ENCODE measurements at regions of chr16 and their contacts with region 1.

Region 1: DNA sequence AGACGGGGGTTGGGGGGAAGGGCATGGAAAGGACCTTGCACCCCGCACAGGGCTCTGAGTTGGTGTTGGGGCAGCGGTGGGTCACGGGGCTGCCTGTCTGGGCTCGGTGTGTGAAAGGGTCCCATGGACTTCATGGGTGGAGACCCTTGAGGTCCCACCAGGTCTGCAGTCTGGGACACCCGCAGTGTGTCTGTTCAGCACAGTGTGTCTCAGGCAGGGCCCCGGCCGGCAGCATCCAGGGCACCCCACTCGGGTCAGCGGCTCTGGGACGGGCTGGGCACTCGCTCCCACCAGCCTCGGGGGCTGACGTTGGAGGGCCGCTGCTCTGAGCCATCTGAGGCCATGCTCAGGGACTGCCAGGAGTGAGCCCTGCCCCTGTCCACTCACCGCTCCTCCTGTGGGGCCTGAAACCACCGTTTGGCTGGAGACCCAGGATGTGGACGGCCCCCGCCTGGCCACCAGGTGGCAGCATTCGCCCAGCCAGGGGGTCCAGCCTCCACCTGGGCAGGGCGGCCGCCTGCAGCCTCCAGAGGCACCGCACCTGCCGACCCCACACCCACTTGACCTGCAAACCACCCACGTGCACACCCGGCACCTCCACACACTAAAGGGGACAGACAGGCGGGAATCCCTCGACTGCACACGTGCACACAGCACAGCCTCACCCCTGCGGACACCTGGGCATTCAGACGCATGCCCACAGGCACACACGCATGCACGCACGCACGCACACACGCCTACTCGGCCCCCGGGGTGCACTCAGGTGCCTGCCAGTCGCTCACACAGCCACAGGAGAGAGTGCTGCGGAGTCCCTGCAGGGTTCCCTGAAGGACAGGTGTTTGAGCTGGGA is 10.1 kb upstream of the ZFPM1 start:
- DNase-seq: peak; percentile 62
- H3K4me3 ChIP-seq: no peak overlapping the region
- H3K27ac ChIP-seq: no peak overlapping the region
- H3K4me1 ChIP-seq: peaks cover 7% of the 10 kb centered on the region
- H3K27me3 ChIP-seq: no peaks in the 10 kb centered on the region
- CTCF ChIP-seq: peak; percentile 73 to 92

Region 2: DNA sequence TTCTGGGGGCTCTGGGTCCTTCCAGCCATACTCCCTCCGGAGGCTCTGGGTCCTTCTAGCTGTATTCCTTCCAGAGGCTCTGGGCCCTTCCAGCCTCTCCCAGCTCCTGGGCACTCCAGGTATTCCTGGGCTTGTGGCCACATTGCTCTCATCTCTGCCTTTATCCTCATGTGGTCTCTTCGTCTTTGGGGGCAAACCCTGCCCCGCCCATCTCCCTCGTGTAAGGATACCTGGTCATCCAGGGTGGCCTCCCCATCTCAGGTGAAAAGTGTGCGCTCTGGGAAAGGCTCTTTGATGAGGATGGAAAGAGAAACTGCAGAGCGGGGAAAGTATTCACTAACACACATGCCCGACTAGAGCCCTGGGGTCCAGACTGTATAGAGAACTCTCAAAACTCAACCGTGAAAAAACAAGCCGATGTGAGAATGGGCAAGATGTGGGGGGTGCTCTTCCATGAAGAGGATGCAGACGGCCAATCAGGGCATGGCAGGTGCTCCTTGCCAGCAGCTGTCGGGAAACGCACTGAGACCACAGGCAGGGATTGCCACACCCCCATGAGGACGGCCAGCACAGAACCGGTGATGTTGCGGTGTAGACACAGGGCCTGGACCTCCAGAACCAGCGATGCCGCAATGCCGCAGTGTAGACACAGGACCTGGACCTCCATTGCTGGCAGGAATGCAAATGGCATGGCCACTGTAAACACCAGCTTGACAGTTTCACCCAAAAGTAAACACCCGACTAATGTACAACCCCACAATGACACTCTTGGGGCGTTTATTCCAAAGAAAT is 327.0 kb before region 1 on chr16:
- CTCF ChIA-PET with region 1: interaction called, 11 read pairs
- dilution Hi-C with region 1: no loop called
- in situ Hi-C with region 1: no loop called
- intact Hi-C with region 1: no loop called
- DNase-seq: no peak
- H3K4me3 ChIP-seq: no peak overlapping the region
- H3K27ac ChIP-seq: no peak overlapping the region
- H3K4me1 ChIP-seq: peaks cover 28% of the 10 kb centered on the region
- H3K27me3 ChIP-seq: no peaks in the 10 kb centered on the region
- CTCF ChIP-seq: no peak

Region 3: GRCh38 chr16:88194397-88195268 is 248.3 kb before region 1 on chr16:
- CTCF ChIA-PET with region 1: no interaction called
- dilution Hi-C with region 1: no loop called
- in situ Hi-C with region 1: loop called (anchors 10 to 25 kb)
- intact Hi-C with region 1: no loop called
- DNase-seq: no peak
- H3K4me3 ChIP-seq: no peak overlapping the region
- H3K27ac ChIP-seq: no peak overlapping the region
- H3K4me1 ChIP-seq: no peaks in the 10 kb centered on the region
- H3K27me3 ChIP-seq: no peaks in the 10 kb centered on the region
- CTCF ChIP-seq: no peak

Region 4: GRCh38 chr16:88505405-88506082 is 62.6 kb after region 1 on chr16:
- CTCF ChIA-PET with region 1: no interaction called
- dilution Hi-C with region 1: no loop called
- in situ Hi-C with region 1: no loop called
- intact Hi-C with region 1: loop called (anchors 1 kb)
- DNase-seq: peak; percentile 19
- H3K4me3 ChIP-seq: no peak overlapping the region
- H3K27ac ChIP-seq: no peak overlapping the region
- H3K4me1 ChIP-seq: peaks cover 12% of the 10 kb centered on the region
- H3K27me3 ChIP-seq: no peaks in the 10 kb centered on the region
- CTCF ChIP-seq: peak; percentile 45 to 52

Region 5: DNA sequence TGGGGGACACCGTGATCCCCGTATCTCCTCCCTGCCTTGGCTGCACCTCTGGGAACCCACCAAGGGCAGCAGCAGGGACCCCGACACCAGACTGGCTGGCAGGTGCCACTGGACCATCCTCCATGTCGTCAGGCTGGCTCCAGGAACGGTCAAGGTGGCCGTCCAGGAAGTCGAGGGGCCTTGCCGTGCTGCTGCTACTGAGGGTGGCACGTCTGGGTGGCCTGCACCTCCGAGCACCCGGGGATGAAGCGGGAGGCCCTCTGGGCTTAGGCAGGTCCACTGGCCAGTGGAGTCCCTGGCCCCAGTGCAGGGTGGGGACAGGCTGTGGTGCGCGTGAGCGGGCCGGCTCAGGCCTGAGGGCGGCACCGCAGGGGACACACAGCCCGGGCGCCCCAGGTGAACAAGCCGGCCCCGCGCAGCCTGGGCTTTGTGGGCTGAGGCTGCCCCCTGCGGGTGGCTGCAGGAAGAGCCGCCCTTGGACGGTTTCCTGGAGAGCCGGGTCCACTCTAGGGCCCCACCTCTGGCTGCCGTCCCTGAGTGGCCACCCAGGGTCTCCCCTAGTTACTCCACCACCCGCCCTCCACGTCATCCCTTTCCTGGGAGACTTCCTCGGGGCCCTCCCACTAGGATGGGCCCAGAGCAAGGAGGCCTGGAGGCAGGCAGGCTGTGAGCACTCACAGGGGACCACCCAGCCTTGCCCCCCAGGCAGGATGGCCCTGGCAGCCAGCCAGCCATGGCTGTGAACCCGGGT is 84.4 kb after region 1 on chr16:
- CTCF ChIA-PET with region 1: no interaction called
- dilution Hi-C with region 1: no loop called
- in situ Hi-C with region 1: no loop called
- intact Hi-C with region 1: loop called (anchors 1 kb)
- DNase-seq: peak; percentile 23
- H3K4me3 ChIP-seq: no peak overlapping the region
- H3K27ac ChIP-seq: no peak overlapping the region
- H3K4me1 ChIP-seq: no peaks in the 10 kb centered on the region
- H3K27me3 ChIP-seq: no peaks in the 10 kb centered on the region
- CTCF ChIP-seq: peak; percentile 56 to 79

Region 6: GRCh38 chr16:88561485-88562369 is 118.8 kb after region 1 on chr16:
- CTCF ChIA-PET with region 1: no interaction called
- dilution Hi-C with region 1: no loop called
- in situ Hi-C with region 1: no loop called
- intact Hi-C with region 1: loop called (anchors 1 kb)
- DNase-seq: peak; percentile 17
- H3K4me3 ChIP-seq: peak overlapping the region; percentile 8 to 38 (median 11)
- H3K27ac ChIP-seq: no peak overlapping the region
- H3K4me1 ChIP-seq: no peaks in the 10 kb centered on the region
- H3K27me3 ChIP-seq: no peaks in the 10 kb centered on the region
- CTCF ChIP-seq: peak; percentile 61 to 74

Region 7: GRCh38 chr16:89171463-89172170 is 728.7 kb after region 1 on chr16 and contains the start of gene CDH15:
- CTCF ChIA-PET with region 1: no interaction called
- dilution Hi-C with region 1: no loop called
- in situ Hi-C with region 1: no loop called
- intact Hi-C with region 1: loop called (anchors 5 kb)
- DNase-seq: peak; percentile 92
- H3K4me3 ChIP-seq: peak within 1 kb of the TSS in 2 of 3 experiments; percentile 23 to 42
- H3K27ac ChIP-seq: no peak within 1 kb of the TSS
- H3K4me1 ChIP-seq: peaks cover 26% of the 10 kb centered on the region
- H3K27me3 ChIP-seq: no peaks in the 10 kb centered on the region
- CTCF ChIP-seq: no peak
- total RNA-seq, gene CDH15: 0.14 to 0.33 TPM

Measured in mammary epithelial cell (primary cell).